ENCODE measurements at regions of chr14 and their contacts with region 1.

Region 1: GRCh38 chr14:77799863-77800730 is at the start of gene ADCK1:
- DNase-seq: peak; percentile 80
- H3K4me3 Mint-ChIP-seq: peak within 1 kb of the TSS; percentile 86
- H3K27ac Mint-ChIP-seq: peak within 1 kb of the TSS; percentile 86
- H3K4me1 Mint-ChIP-seq: peaks cover 8% of the 10 kb centered on the region
- H3K27me3 Mint-ChIP-seq: peaks cover 3% of the 10 kb centered on the region
- total RNA-seq, gene ADCK1: 4.1 and 5.2 TPM in 2 replicates

Region 2: GRCh38 chr14:77760381-77761246 is 39.5 kb before region 1 on chr14 and contains the start of gene SNW1:
- intact Hi-C with region 1: loop called (anchors 1 kb)
- DNase-seq: peak; percentile 90
- H3K4me3 Mint-ChIP-seq: peak within 1 kb of the TSS; percentile 97
- H3K27ac Mint-ChIP-seq: peak within 1 kb of the TSS; percentile 97
- H3K4me1 Mint-ChIP-seq: peaks cover 28% of the 10 kb centered on the region
- H3K27me3 Mint-ChIP-seq: peaks cover 4% of the 10 kb centered on the region
- total RNA-seq, gene SNW1: 101 and 114 TPM in 2 replicates

Region 3: GRCh38 chr14:77849711-77850110 is 49.6 kb after region 1 on chr14:
- intact Hi-C with region 1: no loop called
- DNase-seq: no peak
- H3K4me3 Mint-ChIP-seq: no peak overlapping the region
- H3K27ac Mint-ChIP-seq: no peak overlapping the region
- H3K4me1 Mint-ChIP-seq: no peaks in the 10 kb centered on the region
- H3K27me3 Mint-ChIP-seq: no peaks in the 10 kb centered on the region

Measured in activated T-helper 2 cell treated with anti-CD3 and anti-CD28 coated beads, Interferon-gamma antibody, Interleukin-2, Interleukin-4, amounts not matched to agents 10 μg/mL and 5 μg/mL and 100 μg/mL, durations not matched to agents 14 hours and 24 hours and 36 hours (primary cell).